ENCODE measurements at regions of chr17 and their contacts with region 1.

Region 1: DNA sequence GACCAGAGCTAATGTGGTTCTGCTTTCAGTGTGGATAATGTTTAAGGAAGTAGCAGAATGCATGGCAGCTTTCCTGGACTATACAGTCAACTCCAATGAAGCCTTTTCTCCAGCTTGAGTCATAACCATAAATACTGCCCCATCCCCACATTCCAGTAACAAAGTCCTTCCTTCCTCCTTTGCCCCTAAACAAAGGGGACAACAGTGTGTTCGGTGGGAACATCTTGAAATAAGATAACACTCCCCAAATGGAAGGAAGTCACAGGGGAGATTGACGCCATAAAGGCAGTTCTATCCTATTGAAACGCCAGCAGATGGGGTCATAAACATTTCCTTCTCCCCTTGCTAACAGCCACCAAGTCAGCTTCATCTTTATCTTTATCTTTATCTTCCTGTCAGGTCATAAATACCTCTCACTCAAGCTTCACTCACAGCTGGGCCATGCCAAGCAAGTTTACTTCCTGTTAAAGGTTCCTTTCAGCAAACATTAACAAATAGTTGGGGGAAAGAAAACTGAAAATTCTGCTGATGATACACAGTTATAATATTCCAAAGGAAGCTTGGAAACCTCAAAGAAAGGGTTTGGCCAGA is 136.7 kb downstream of the SNX11 start:
- DNase-seq: peak in 1 of 5 donors; percentile 15
- H3K4me3 ChIP-seq: no peak overlapping the region
- H3K4me3 Mint-ChIP-seq: peak overlapping the region in 2 of 8 donors; percentile 12 to 45
- H3K27ac ChIP-seq: no peak overlapping the region
- H3K27ac Mint-ChIP-seq: peak overlapping the region in 3 of 7 donors; percentile 10 to 86 (median 78)
- H3K4me1 ChIP-seq: peaks cover 66% of the 10 kb centered on the region
- H3K4me1 Mint-ChIP-seq: peaks cover 53 to 76% (median 65%) of the 10 kb centered on the region in 4 donors
- H3K27me3 ChIP-seq: no peaks in the 10 kb centered on the region
- H3K27me3 Mint-ChIP-seq: no peaks in the 10 kb centered on the region

Region 2: DNA sequence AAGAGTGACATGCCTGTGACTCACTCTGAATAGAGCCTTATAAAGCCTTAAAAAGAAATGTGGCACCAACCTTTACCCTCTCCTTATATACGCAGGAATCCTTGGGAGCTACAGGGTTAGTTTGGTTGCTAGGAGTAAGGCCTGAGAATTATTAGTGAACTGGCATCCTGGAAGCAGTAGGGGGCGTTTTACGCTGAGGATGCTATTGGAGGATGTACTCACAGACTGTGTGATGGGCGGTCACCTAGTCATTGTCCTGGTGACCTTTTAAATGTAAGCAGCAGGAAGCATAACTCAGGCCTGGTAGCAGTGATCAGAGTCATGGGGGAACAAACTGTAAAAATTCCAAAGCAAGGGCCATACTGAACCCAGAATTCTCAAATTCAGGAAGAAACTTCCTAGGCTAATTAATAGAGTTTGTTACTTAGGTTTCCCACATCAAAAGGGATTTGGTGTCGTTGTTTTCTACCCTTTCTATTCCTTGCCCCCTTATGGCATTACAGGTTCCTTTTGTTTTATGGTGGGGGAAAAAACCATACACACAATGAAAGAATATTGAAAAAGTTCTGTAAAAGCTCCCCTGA is 17.2 kb after region 1 on chr17:
- CTCF ChIA-PET with region 1: interaction called, 11 read pairs
- POLR2A ChIA-PET with region 1: no interaction called
- intact Hi-C with region 1: no loop called
- DNase-seq: no peak
- H3K4me3 ChIP-seq: no peak overlapping the region
- H3K4me3 Mint-ChIP-seq: peak overlapping the region in 1 of 8 donors; percentile 8
- H3K27ac ChIP-seq: no peak overlapping the region
- H3K27ac Mint-ChIP-seq: peak overlapping the region in 2 of 7 donors; percentile 43 to 66
- H3K4me1 ChIP-seq: peaks cover 3% of the 10 kb centered on the region
- H3K4me1 Mint-ChIP-seq: peaks cover 6 to 28% (median 19%) of the 10 kb centered on the region in 4 donors
- H3K27me3 ChIP-seq: no peaks in the 10 kb centered on the region
- H3K27me3 Mint-ChIP-seq: no peaks in the 10 kb centered on the region

Measured in CD4-positive, alpha-beta memory T cell (primary cell).